Cardiac septum (tissue), 1 donor: ENCODE measurements at regions of chr9 and their contacts with region 1.

Region 1: DNA sequence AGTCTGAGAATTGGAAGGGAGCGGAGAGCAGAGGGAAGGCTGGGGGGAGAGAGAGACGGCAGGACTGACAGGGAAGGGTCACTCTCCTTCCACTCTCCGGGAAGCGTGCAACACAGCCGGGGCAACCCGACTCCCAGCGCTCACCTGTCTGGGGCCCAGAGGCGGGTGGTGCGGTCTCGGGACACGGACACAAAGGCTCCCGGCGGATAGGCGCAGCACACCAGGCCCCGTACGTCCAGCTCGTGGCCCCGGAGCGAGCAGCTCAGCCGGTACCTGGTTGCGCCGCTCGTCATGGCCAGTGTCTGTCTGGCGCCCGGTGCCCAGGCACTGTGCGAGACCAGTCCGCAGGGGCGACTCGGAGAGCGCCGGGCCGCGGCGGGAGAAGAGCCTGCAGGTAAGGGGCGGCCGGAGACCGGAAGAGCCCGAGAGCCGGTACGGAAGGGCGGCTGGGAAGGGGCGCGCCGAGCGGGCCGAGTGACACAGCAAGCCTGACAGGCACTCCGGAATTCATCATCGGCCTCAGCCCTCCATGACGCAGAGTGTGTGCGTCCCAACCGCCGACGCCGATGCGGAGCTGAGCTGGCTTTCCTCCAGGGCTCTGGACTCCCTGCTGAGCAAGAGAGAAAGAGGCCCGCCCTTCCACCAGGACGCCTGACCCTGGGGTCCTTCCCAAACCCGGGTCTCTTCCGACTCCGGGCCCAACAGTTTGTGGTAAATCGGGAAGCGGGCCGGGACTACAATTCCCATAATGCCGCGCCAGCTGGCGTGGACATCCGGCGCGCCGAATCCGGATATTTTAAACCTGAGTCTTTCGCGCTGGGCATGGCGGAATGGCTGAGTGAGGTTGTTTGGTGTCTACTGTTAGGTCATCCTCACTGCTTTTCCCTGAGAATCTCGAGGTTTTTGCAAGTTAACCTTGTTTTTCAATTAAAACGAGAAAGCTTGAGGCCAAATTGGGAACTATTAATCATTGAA is at the start of gene PLAA:
- DNase-seq: peak; percentile 96
- total RNA-seq, gene PLAA: 31.5 TPM

Region 2: GRCh38 chr9:26892251-26893029 is 54.6 kb before region 1 on chr9 and contains the start of gene CAAP1:
- intact Hi-C with region 1: loop called (anchors 2 kb)
- DNase-seq: peak; percentile 96
- total RNA-seq, gene CAAP1: 8.3 TPM

Region 3: DNA sequence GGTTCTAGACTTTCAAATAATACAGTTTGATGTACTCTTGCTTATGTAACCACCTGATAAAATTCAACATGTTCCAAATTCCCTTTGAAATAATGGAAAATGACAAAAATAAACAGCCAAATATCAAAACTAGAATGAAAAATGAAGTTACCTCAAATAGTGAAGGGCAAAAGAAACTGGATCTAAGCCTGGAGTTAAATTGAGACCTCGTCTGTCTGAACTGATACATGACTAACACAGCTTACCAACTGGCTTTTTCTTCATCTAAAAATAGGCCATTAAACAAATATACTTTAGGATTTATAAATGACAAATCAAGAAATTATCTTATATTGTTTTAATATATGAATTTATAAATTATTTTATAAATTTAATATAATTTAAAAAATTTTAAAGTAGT is 42.4 kb before region 1 on chr9:
- intact Hi-C with region 1: no loop called
- DNase-seq: no peak